CD8-positive, alpha-beta T cell (primary cell): ENCODE measurements at regions of chr10 and their contacts with region 1.

Region 1: DNA sequence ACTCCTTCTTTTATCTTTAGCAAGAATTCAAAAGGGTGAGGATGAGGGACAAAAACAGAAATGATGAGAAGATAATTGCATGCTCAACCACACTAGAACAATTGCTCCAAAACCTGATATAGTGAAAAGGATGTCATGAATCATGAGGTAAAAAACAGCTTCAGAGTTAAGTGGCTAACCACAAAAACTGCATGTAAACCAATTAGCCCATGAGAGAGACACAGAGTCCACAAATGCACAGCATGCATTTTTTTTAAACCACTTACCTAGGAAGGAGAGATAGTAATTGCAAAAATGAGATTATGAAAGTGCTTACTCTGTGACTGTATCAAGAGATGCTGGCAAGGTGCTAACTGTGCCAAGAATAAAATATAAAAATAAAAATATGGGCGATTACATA is 132.9 kb downstream of the MBL2 start:
- DNase-seq: no peak
- ATAC-seq: no peak
- H3K4me3 ChIP-seq: no peak overlapping the region
- H3K4me3 Mint-ChIP-seq: no peak overlapping the region
- H3K27ac ChIP-seq: no peak overlapping the region
- H3K27ac Mint-ChIP-seq: no peak overlapping the region
- H3K4me1 ChIP-seq: no peaks in the 10 kb centered on the region
- H3K4me1 Mint-ChIP-seq: no peaks in the 10 kb centered on the region
- H3K27me3 ChIP-seq: no peaks in the 10 kb centered on the region
- H3K27me3 Mint-ChIP-seq: no peaks in the 10 kb centered on the region
- CTCF ChIP-seq: no peak

Region 2: DNA sequence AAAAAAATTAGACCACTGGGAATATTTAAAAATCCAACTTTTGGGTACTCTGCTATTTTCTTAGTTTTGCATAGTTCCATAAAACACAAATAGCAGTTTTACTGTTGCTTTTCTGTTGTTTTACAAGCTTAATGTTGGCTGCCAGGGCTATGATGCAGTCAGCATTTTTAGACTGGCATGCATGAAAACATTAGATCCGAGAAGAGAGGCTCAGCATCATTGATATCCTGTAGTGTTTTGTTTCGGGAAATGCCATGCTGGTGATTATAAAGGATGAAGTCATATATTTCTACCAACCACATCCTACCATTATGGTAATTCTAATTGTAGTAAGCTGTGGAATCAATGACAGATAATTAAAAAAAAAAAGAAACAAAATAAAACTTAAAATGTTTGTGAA is 28.4 kb after region 1 on chr10:
- CTCF ChIA-PET with region 1: no interaction called
- POLR2A ChIA-PET with region 1: no interaction called
- intact Hi-C with region 1: loop called in 1 of 2 experiments (anchors 1 kb)
- DNase-seq: no peak
- ATAC-seq: no peak
- H3K4me3 ChIP-seq: no peak overlapping the region
- H3K4me3 Mint-ChIP-seq: no peak overlapping the region
- H3K27ac ChIP-seq: no peak overlapping the region
- H3K27ac Mint-ChIP-seq: no peak overlapping the region
- H3K4me1 ChIP-seq: no peaks in the 10 kb centered on the region
- H3K4me1 Mint-ChIP-seq: no peaks in the 10 kb centered on the region
- H3K27me3 ChIP-seq: no peaks in the 10 kb centered on the region
- H3K27me3 Mint-ChIP-seq: no peaks in the 10 kb centered on the region
- CTCF ChIP-seq: no peak

Region 3: DNA sequence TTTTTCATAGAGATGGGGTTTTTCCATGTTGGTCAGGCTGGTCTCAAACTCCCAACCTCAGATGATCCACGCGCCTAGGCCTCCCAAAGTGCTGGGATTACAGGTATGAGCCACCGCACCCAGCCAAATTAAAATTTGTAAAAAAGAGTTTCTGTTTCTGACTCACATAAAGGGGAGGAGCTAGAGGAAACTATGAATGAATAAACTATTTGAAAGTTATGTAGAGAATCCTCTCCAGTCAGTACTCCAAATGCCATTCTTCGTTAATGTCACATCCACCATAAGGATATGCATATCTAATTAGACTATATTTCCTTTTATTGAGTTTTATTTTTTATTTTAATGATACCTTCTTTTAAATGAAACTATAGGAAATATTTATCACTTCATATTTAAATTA is 80.4 kb after region 1 on chr10:
- CTCF ChIA-PET with region 1: no interaction called
- POLR2A ChIA-PET with region 1: no interaction called
- intact Hi-C with region 1: no loop called
- DNase-seq: no peak
- ATAC-seq: no peak
- H3K4me3 ChIP-seq: no peak overlapping the region
- H3K4me3 Mint-ChIP-seq: no peak overlapping the region
- H3K27ac ChIP-seq: no peak overlapping the region
- H3K27ac Mint-ChIP-seq: no peak overlapping the region
- H3K4me1 ChIP-seq: no peaks in the 10 kb centered on the region
- H3K4me1 Mint-ChIP-seq: no peaks in the 10 kb centered on the region
- H3K27me3 ChIP-seq: no peaks in the 10 kb centered on the region
- H3K27me3 Mint-ChIP-seq: no peaks in the 10 kb centered on the region
- CTCF ChIP-seq: no peak

Region 4: GRCh38 chr10:53135213-53135896 is 495.7 kb after region 1 on chr10:
- CTCF ChIA-PET with region 1: no interaction called
- POLR2A ChIA-PET with region 1: no interaction called
- intact Hi-C with region 1: no loop called
- DNase-seq: no peak
- ATAC-seq: no peak
- H3K4me3 ChIP-seq: no peak overlapping the region
- H3K4me3 Mint-ChIP-seq: no peak overlapping the region
- H3K27ac ChIP-seq: no peak overlapping the region
- H3K27ac Mint-ChIP-seq: no peak overlapping the region
- H3K4me1 ChIP-seq: no peaks in the 10 kb centered on the region
- H3K4me1 Mint-ChIP-seq: no peaks in the 10 kb centered on the region
- H3K27me3 ChIP-seq: no peaks in the 10 kb centered on the region
- H3K27me3 Mint-ChIP-seq: no peaks in the 10 kb centered on the region
- CTCF ChIP-seq: no peak